Mammary epithelial cell (primary cell): ENCODE measurements at regions of chr10 and their contacts with region 1.

Region 1: DNA sequence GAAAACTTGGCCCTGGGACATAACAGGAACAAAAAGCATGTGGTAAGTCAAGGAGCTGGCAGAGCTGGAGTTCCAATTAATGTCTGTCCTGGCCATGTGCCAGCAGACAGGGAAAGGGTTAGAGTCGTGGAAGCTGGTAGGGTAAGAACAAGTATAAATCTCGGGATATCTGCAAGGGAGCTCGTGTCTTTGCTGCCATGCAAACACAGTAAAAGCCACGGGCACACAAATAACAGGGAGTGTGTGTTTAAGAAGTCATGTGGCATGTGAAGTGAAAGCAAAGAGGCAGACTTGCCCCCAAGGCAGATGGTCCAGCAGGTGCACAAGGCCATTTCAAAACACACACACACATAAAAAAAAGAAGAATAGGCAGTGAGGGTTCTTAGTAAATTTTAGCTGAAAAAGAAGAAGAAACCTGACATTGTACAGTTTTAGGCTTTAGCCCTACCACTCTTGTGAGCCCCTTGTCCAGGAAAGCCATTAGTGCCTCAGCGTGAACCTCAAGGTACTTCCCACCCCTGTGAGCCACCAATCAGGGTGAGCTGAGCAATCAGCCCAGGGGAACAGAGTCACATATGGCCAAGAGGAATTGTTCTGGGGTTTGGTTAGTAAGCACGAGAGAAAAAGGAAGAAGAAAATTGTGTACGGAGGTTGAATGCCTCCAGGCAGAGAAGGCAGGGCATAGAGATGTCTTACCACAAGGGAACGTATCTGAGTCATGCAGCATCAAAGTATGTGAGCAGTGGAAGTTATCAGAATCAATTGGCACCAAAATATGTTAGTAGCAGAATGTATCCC is 32.8 kb upstream of the ARHGAP12 start:
- DNase-seq: peak; percentile 96
- H3K4me3 ChIP-seq: peak overlapping the region in 2 of 3 experiments; percentile 2 to 14
- H3K27ac ChIP-seq: peak overlapping the region; percentile 78
- H3K4me1 ChIP-seq: peaks cover 47% of the 10 kb centered on the region
- H3K27me3 ChIP-seq: no peaks in the 10 kb centered on the region
- CTCF ChIP-seq: peak in 1 of 2 donors; percentile 8

Region 2: GRCh38 chr10:31687663-31688482 is 273.6 kb before region 1 on chr10:
- CTCF ChIA-PET with region 1: no interaction called
- dilution Hi-C with region 1: no loop called
- in situ Hi-C with region 1: no loop called
- intact Hi-C with region 1: no loop called
- DNase-seq: no peak
- H3K4me3 ChIP-seq: no peak overlapping the region
- H3K27ac ChIP-seq: no peak overlapping the region
- H3K4me1 ChIP-seq: no peaks in the 10 kb centered on the region
- H3K27me3 ChIP-seq: no peaks in the 10 kb centered on the region
- CTCF ChIP-seq: no peak

Region 3: DNA sequence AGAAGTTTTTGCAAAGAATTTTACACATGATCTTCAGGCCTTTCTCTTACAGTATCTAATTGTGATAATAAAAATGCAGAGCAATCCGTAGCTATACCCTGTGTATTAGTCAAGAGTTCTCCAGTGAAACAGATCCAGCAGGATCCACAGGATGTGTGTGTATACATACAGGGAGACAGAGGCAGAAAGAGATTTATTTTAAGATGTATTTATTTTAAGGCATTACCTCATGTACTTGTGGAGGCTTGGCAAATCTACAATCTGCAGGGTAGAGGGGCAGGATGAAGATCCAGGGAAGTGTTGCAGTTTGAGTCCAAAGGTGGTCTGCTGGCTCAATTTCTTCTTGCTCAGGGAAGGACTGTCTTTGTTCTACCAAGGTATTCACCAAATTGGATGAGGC is 74.6 kb before region 1 on chr10:
- CTCF ChIA-PET with region 1: no interaction called
- dilution Hi-C with region 1: no loop called
- in situ Hi-C with region 1: no loop called
- intact Hi-C with region 1: no loop called
- DNase-seq: no peak
- H3K4me3 ChIP-seq: no peak overlapping the region
- H3K27ac ChIP-seq: no peak overlapping the region
- H3K4me1 ChIP-seq: peaks cover 10% of the 10 kb centered on the region
- H3K27me3 ChIP-seq: no peaks in the 10 kb centered on the region
- CTCF ChIP-seq: no peak

Region 4: GRCh38 chr10:32031424-32031823 is 69.9 kb after region 1 on chr10:
- CTCF ChIA-PET with region 1: no interaction called
- dilution Hi-C with region 1: loop called (anchors 5 kb)
- in situ Hi-C with region 1: no loop called
- intact Hi-C with region 1: no loop called
- DNase-seq: no peak
- H3K4me3 ChIP-seq: no peak overlapping the region
- H3K27ac ChIP-seq: no peak overlapping the region
- H3K4me1 ChIP-seq: no peaks in the 10 kb centered on the region
- H3K27me3 ChIP-seq: no peaks in the 10 kb centered on the region
- CTCF ChIP-seq: no peak